MCF 10A (cell line): ENCODE measurements at regions of chr1 and their contacts with region 1.

Region 1: GRCh38 chr1:1959840-1960479 is 40.9 kb upstream of the TMEM52 start:
- DNase-seq: peak; percentile 88
- H3K4me3 Mint-ChIP-seq: no peak overlapping the region
- H3K27ac Mint-ChIP-seq: no peak overlapping the region
- H3K4me1 Mint-ChIP-seq: peaks cover 10% of the 10 kb centered on the region
- H3K27me3 Mint-ChIP-seq: peaks cover 37% of the 10 kb centered on the region
- CTCF ChIP-seq: peak; percentile 91

Region 2: DNA sequence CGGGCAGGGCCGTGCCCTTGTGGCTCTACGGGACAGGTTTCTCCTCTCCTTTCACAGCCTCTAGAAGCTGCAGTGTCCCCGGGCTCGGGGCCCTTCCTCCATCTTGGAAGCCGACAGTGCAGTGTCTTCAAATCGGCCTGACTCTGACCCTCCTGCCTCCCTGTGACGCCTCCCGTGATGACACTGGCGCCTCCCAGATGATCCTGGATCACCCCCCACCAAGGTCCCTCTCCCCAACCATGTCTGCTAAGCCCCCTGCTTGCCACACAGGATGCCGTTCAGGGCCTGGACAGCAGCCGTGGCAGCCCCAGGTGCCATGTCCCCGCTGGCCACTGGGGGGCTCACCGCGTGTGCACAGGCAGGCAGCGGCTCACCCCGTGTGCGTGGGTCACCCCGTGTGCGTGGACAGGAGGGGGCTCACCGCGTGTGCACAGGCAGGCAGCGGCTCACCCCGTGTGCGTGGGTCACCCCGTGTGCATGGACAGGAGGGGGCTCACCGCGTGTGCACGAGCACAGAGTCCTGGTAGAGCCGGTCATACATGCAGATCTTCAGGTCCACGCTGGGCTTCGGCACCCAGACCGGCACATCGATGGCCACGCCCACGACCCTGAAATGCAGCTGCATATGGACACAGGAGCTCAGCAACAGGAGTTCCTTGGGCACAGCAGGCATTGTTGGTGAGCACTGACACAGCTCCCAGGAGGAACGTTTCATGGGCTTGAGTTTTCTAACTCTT is 16.0 kb before region 1 on chr1:
- CTCF ChIA-PET with region 1: interaction called, 21 read pairs
- POLR2A ChIA-PET with region 1: no interaction called
- intact Hi-C with region 1: no loop called
- DNase-seq: peak; percentile 27
- H3K4me3 Mint-ChIP-seq: no peak overlapping the region
- H3K27ac Mint-ChIP-seq: no peak overlapping the region
- H3K4me1 Mint-ChIP-seq: no peaks in the 10 kb centered on the region
- H3K27me3 Mint-ChIP-seq: peaks cover 24% of the 10 kb centered on the region
- CTCF ChIP-seq: peak; percentile 89

Region 3: GRCh38 chr1:2049718-2050427 is 89.9 kb after region 1 on chr1 and contains the start of gene PRKCZ:
- CTCF ChIA-PET with region 1: interaction called, 129 read pairs
- POLR2A ChIA-PET with region 1: interaction called, 8 read pairs
- intact Hi-C with region 1: loop called (anchors 1 kb)
- DNase-seq: peak; percentile 90
- H3K4me3 Mint-ChIP-seq: peak within 1 kb of the TSS; percentile 72
- H3K27ac Mint-ChIP-seq: no peak within 1 kb of the TSS
- H3K4me1 Mint-ChIP-seq: peaks cover 11% of the 10 kb centered on the region
- H3K27me3 Mint-ChIP-seq: no peaks in the 10 kb centered on the region
- CTCF ChIP-seq: no peak
- total RNA-seq, gene PRKCZ: 20.3 and 24.9 TPM in 2 replicates